IMR-90 (cell line): ENCODE measurements at regions of chr2 and their contacts with region 1.

Region 1: DNA sequence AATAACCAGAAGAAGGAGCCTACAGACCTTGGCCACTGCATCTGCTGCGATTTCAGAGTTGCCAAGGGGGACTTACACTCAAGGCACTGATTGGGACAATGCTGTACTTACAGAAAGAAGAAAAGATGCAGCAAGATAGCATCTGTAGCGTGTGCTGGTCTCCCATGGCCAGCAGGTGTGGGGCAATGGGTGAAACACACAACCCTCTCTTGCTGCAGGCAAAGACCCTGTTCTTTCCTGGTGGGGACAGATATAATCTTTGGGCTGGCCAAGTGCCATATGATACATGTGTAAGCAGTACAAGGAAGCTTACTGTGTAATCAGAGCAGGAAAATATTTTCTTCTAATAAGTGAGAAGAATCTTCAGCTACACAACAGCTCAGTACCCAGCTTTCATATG is 85.3 kb upstream of the GPR45 start:
- DNase-seq: no peak
- ATAC-seq: no peak
- H3K4me3 ChIP-seq: no peak overlapping the region
- H3K27ac ChIP-seq: no peak overlapping the region
- H3K4me1 ChIP-seq: no peaks in the 10 kb centered on the region
- H3K27me3 ChIP-seq: no peaks in the 10 kb centered on the region
- CTCF ChIP-seq: no peak
- POLR2A ChIP-seq: no peak
- RAD21 ChIP-seq: no peak

Region 2: DNA sequence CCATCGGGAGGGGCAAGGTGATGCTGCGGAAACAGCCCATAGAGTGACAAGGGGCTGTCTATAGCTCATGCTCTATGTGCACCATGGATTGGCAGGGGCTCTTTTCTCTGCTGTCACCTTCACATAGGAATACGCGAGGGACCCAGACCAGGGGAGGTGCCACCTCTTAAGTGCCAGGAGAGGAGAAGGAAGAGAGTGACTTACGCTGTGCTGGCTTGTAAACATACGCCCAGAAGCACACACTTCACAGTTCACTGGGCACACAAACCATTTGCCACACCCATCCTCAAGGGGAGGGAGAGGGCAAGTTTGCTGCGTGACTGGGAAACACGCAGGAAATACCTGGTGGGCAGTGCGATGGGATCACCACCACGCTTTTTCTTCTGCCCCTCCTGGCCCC is 20.2 kb after region 1 on chr2:
- CTCF ChIA-PET with region 1: no interaction called
- POLR2A ChIA-PET with region 1: no interaction called
- dilution Hi-C with region 1: no loop called
- in situ Hi-C with region 1: no loop called
- intact Hi-C with region 1: loop called (anchors 1 kb)
- DNase-seq: no peak
- ATAC-seq: no peak
- H3K4me3 ChIP-seq: no peak overlapping the region
- H3K27ac ChIP-seq: no peak overlapping the region
- H3K4me1 ChIP-seq: no peaks in the 10 kb centered on the region
- H3K27me3 ChIP-seq: peaks cover 20% of the 10 kb centered on the region
- CTCF ChIP-seq: no peak
- POLR2A ChIP-seq: no peak
- RAD21 ChIP-seq: no peak

Region 3: GRCh38 chr2:105278654-105279053 is 122.4 kb after region 1 on chr2:
- CTCF ChIA-PET with region 1: no interaction called
- POLR2A ChIA-PET with region 1: no interaction called
- dilution Hi-C with region 1: no loop called
- in situ Hi-C with region 1: no loop called
- intact Hi-C with region 1: no loop called
- DNase-seq: no peak
- ATAC-seq: no peak
- H3K4me3 ChIP-seq: no peak overlapping the region
- H3K27ac ChIP-seq: no peak overlapping the region
- H3K4me1 ChIP-seq: no peaks in the 10 kb centered on the region
- H3K27me3 ChIP-seq: no peaks in the 10 kb centered on the region
- CTCF ChIP-seq: no peak
- POLR2A ChIP-seq: no peak
- RAD21 ChIP-seq: no peak